ENCODE measurements at regions of chr1 and their contacts with region 1.

Region 1: DNA sequence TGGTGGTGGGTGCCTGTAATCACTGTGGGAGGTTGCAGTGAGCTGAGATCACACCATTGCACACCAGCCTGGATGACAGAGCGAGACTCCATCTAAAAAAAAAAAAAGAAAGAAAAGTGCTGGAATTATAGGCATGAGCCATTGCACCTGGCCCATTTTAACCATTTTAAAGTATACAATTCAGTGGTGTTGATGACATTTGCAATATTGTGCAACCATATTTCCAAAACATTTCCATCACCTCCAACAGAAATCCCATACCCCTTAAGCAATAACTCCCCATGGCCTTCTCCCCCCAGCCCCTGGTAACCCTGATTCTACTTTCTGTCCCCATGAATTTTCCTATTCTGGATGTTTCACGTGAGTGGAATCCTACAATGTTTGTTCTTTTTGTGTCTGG is 11.0 kb upstream of the GPR157 start:
- DNase-seq: no peak
- H3K4me3 Mint-ChIP-seq: no peak overlapping the region
- H3K27ac Mint-ChIP-seq: no peak overlapping the region
- H3K4me1 Mint-ChIP-seq: peaks cover 7% of the 10 kb centered on the region
- H3K27me3 Mint-ChIP-seq: peaks cover 46% of the 10 kb centered on the region

Region 2: DNA sequence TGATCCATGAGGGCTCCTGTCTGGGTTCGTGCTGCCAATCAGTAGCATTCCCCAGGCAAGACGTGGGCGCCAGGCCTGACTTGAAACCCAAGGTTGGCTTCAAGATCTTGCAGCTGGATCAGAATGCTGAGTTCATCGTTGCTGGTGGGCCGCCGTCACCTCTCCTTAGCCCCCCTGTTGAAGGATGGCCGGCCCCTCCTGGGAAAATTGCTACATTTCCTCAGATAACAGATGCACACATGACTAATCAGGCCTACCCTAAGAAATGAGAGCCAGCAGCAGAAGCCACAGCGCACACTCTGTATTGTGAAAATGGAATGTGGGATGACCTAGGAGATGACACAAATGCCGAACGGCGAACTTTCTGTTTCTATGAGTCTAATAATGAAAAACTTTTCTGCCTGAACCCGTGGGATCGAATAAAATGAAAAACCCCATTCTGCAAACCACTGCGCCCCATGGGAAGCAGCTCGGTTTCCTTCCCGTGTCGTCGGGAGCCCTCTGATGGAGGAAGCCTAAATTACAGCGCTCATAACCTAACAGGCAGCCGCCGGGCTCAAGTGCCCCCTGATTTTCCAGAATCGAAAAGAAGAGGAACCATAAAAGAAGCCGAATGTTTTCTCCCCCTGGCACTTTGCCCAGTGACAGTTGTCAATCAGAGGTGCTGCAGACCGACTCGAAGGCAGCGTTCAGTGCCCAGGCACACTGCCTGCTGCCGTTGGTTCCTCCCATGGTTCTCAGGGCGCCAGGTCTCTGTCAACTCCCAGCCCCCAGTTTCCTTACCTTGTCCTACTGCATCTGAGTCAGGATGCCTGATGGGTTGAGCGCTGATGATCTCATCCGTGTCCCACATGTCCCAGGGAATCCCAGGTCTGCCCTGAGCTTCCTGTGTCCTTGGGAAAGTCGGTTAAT is 56.5 kb after region 1 on chr1:
- CTCF ChIA-PET with region 1: interaction called, 23 read pairs
- DNase-seq: peak; percentile 72
- H3K4me3 Mint-ChIP-seq: no peak overlapping the region
- H3K27ac Mint-ChIP-seq: no peak overlapping the region
- H3K4me1 Mint-ChIP-seq: peaks cover 21% of the 10 kb centered on the region
- H3K27me3 Mint-ChIP-seq: peaks cover 96% of the 10 kb centered on the region

Region 3: GRCh38 chr1:9473032-9473792 is 333.3 kb after region 1 on chr1:
- CTCF ChIA-PET with region 1: no interaction called
- DNase-seq: no peak
- H3K4me3 Mint-ChIP-seq: no peak overlapping the region
- H3K27ac Mint-ChIP-seq: no peak overlapping the region
- H3K4me1 Mint-ChIP-seq: no peaks in the 10 kb centered on the region
- H3K27me3 Mint-ChIP-seq: peaks cover 53% of the 10 kb centered on the region

Measured in activated naive CD4-positive, alpha-beta T cell treated with anti-CD3 and anti-CD28 coated beads, Interleukin-2, amount 10 ng/mL, durations not matched to agents 7 days and 5 days (primary cell).